ENCODE measurements at regions of chr19 and their contacts with region 1.

Region 1: DNA sequence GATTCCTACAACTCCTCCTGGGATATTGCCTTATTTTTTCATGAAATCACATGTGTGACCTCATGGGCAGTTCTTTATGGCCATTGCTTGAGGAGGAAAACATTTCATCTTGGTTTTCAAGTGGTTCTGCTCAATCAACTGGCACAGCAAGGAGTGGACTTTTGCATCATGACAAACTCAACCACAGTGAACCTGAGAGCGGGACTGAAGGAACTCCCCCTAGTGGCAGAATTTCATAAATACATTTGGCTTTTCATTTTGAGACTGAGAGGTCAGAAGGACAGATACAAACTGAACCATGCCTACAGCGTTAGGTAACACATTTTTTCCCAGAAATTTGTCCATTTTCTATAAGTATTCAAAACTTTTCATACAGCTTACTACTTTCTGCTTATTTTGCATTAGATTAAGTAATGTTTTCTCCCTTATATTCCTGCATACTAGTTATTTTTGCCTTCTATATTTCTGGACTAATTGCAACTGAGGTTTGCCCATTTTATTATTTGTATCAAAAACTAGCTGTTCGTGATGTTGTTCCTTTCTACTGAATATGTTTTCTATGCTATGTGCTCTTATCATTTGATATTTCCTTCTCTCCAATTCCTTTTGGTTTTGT is 13.4 kb upstream of the SIGLEC12 start:
- DNase-seq: peak; percentile 51
- H3K4me3 ChIP-seq: no peak overlapping the region
- H3K27ac ChIP-seq: no peak overlapping the region
- H3K4me1 ChIP-seq: no peaks in the 10 kb centered on the region
- H3K27me3 ChIP-seq: peaks cover 15% of the 10 kb centered on the region; the same call in 1 of the 2 replicates
- CTCF ChIP-seq: peak; percentile 79
- EP300 ChIP-seq: no peak
- RAD21 ChIP-seq: peak; percentile 43

Region 2: GRCh38 chr19:51422053-51422448 is 92.9 kb before region 1 on chr19:
- CTCF ChIA-PET with region 1: interaction called, 11 read pairs
- POLR2A ChIA-PET with region 1: no interaction called
- DNase-seq: peak; percentile 91
- H3K4me3 ChIP-seq: no peak overlapping the region; a peak in 1 of 4 replicates
- H3K27ac ChIP-seq: no peak overlapping the region
- H3K4me1 ChIP-seq: no peaks in the 10 kb centered on the region; a peak in 1 of 4 replicates
- H3K27me3 ChIP-seq: peaks cover 24% of the 10 kb centered on the region
- CTCF ChIP-seq: peak; percentile 93
- EP300 ChIP-seq: no peak
- RAD21 ChIP-seq: peak; percentile 62

Region 3: GRCh38 chr19:51467864-51468544 is 47.0 kb before region 1 on chr19:
- CTCF ChIA-PET with region 1: interaction called, 16 read pairs
- POLR2A ChIA-PET with region 1: no interaction called
- DNase-seq: no peak
- H3K4me3 ChIP-seq: no peak overlapping the region
- H3K27ac ChIP-seq: no peak overlapping the region
- H3K4me1 ChIP-seq: no peaks in the 10 kb centered on the region
- H3K27me3 ChIP-seq: peaks cover 15% of the 10 kb centered on the region; the same call in 1 of the 2 replicates
- CTCF ChIP-seq: no peak
- EP300 ChIP-seq: no peak
- RAD21 ChIP-seq: no peak

Region 4: DNA sequence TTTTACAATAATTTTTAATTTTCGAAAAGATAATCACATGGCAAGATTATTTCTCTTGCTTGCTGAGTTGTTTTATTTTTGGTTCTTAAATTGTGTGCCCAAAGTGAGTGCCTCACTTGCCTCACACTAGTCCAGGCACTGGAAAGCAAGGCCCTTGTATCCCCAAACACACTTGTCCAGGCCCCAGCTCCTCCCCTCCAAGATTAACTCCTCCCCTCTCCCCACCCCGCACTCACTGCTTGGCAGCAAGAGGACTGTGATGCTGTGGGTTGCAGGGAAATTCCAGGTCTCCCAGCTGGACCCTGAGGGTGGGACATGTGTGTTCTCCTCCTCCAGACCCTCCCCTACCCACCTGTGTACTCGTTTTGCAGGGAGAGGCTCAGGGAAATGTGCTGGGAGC is 17.3 kb before region 1 on chr19:
- CTCF ChIA-PET with region 1: interaction called, 12 read pairs
- POLR2A ChIA-PET with region 1: no interaction called
- DNase-seq: no peak
- H3K4me3 ChIP-seq: no peak overlapping the region
- H3K27ac ChIP-seq: no peak overlapping the region
- H3K4me1 ChIP-seq: no peaks in the 10 kb centered on the region
- H3K27me3 ChIP-seq: peaks cover 6% of the 10 kb centered on the region; the same call in 1 of the 2 replicates
- CTCF ChIP-seq: no peak
- EP300 ChIP-seq: no peak
- RAD21 ChIP-seq: no peak

Region 5: GRCh38 chr19:51503286-51503817 is 11.6 kb before region 1 on chr19:
- CTCF ChIA-PET with region 1: interaction called, 12 read pairs
- POLR2A ChIA-PET with region 1: no interaction called
- DNase-seq: no peak
- H3K4me3 ChIP-seq: no peak overlapping the region
- H3K27ac ChIP-seq: no peak overlapping the region
- H3K4me1 ChIP-seq: no peaks in the 10 kb centered on the region
- H3K27me3 ChIP-seq: peaks cover 10% of the 10 kb centered on the region; the same call in 1 of the 2 replicates
- CTCF ChIP-seq: no peak
- EP300 ChIP-seq: no peak
- RAD21 ChIP-seq: no peak

Region 6: GRCh38 chr19:51525686-51526085 is 10.7 kb after region 1 on chr19:
- CTCF ChIA-PET with region 1: interaction called, 10 read pairs
- POLR2A ChIA-PET with region 1: no interaction called
- DNase-seq: no peak
- H3K4me3 ChIP-seq: no peak overlapping the region
- H3K27ac ChIP-seq: no peak overlapping the region
- H3K4me1 ChIP-seq: no peaks in the 10 kb centered on the region
- H3K27me3 ChIP-seq: peaks cover 14% of the 10 kb centered on the region
- CTCF ChIP-seq: no peak
- EP300 ChIP-seq: no peak
- RAD21 ChIP-seq: no peak

Measured in SK-N-SH (cell line).